CD4-positive, alpha-beta memory T cell (primary cell): ENCODE measurements at regions of chr9 and their contacts with region 1.

Region 1: GRCh38 chr9:101533334-101534107 is at the start of gene RNF20:
- DNase-seq: peak; percentile 99 to 100 (median 99)
- H3K4me3 ChIP-seq: peak within 1 kb of the TSS; percentile 73 to 79
- H3K4me3 Mint-ChIP-seq: peak within 1 kb of the TSS; percentile 89 to 98 (median 92)
- H3K27ac ChIP-seq: peak within 1 kb of the TSS; percentile 98
- H3K27ac Mint-ChIP-seq: peak within 1 kb of the TSS; percentile 97 to 100 (median 99)
- H3K4me1 ChIP-seq: peaks cover 49% of the 10 kb centered on the region
- H3K4me1 Mint-ChIP-seq: peaks cover 11 to 33% (median 18%) of the 10 kb centered on the region in 4 donors
- H3K27me3 ChIP-seq: no peaks in the 10 kb centered on the region
- H3K27me3 Mint-ChIP-seq: peaks cover 0 to 3% of the 10 kb centered on the region in 2 donors
- total RNA-seq, gene RNF20: 64.5 to 67.4 TPM

Region 2: GRCh38 chr9:100411472-100412283 is 1121.8 kb before region 1 on chr9:
- CTCF ChIA-PET with region 1: no interaction called
- POLR2A ChIA-PET with region 1: no interaction called
- intact Hi-C with region 1: loop called (anchors 5 kb)
- DNase-seq: peak; percentile 80 to 88 (median 81)
- H3K4me3 ChIP-seq: peak overlapping the region; percentile 58 to 59
- H3K4me3 Mint-ChIP-seq: peak overlapping the region; percentile 86 to 94 (median 90)
- H3K27ac ChIP-seq: no peak overlapping the region
- H3K27ac Mint-ChIP-seq: peak overlapping the region; percentile 57 to 92 (median 85)
- H3K4me1 ChIP-seq: peaks cover 8% of the 10 kb centered on the region
- H3K4me1 Mint-ChIP-seq: peaks cover 9 to 14% (median 13%) of the 10 kb centered on the region in 4 donors
- H3K27me3 ChIP-seq: no peaks in the 10 kb centered on the region
- H3K27me3 Mint-ChIP-seq: peaks cover 5 to 20% of the 10 kb centered on the region in 2 donors

Region 3: DNA sequence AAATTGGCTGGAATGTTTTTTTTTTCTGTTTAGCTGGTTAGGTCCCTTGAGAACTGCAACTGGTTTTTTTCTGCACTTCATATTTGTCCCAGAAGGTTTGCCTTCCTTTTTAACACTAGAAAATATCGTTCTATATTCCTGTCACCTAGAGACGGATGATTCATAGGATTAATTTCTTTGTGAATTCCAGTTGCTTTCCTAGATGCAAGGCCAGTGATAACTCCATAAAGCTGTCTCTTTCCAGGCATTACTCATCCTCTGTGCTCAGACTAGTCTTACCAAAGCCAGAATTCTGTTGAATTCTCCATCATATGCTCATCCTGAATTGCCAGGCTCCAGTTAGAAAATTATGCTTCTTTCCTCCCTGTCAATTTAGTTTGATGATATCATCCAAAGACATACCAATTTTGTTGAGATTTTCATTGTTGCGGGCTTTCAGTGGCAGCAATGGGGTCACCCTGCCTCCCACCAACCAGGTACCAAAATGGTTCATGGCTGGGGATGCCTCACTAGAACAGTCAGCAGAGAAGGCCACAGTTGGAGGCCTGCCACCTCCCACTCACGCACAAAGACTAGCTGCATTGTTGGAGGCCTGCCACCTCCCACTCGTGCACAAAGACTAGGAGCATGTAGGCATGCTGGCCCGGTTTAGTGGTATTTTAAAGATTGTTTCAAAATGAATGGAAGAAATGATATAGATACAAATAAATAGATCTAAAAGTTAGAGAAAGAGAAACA is 157.2 kb before region 1 on chr9:
- CTCF ChIA-PET with region 1: no interaction called
- POLR2A ChIA-PET with region 1: no interaction called
- intact Hi-C with region 1: no loop called
- DNase-seq: peak in 1 of 5 donors; percentile 28
- H3K4me3 ChIP-seq: no peak overlapping the region
- H3K4me3 Mint-ChIP-seq: no peak overlapping the region
- H3K27ac ChIP-seq: no peak overlapping the region
- H3K27ac Mint-ChIP-seq: no peak overlapping the region
- H3K4me1 ChIP-seq: no peaks in the 10 kb centered on the region
- H3K4me1 Mint-ChIP-seq: no peaks in the 10 kb centered on the region
- H3K27me3 ChIP-seq: no peaks in the 10 kb centered on the region
- H3K27me3 Mint-ChIP-seq: peaks cover 9 to 13% of the 10 kb centered on the region in 2 donors

Region 4: DNA sequence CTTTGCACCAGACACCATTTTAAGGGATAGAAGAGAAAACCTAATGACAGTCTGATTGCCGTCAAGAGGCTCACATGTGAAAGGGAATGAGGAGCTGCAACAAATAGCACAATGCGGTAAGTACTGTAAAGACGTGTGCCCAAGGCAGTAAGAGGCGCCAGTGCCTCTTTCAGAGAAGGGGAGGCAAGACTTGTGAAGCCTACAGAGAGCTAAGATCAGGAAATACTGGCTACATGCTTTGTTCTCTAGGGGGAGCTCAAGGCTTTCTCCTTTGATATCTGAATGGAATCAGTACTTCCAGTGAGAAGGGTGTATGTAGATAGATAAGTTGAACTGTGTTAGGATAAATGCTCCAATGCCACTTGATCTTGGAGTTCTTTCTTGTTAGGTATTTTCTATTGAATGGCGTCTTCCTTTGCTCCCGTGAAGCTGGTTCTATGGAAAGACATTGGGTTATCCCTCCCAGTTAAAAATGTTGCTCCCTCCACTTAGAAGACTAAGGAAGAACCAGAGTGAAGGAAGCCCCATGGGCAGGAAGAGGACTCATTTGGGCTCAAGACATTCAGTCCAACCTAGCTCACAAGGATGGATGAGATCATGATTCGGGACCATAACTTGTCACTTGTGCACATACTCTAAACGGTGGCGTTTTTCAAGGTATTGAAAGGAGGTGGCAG is 74.4 kb before region 1 on chr9:
- CTCF ChIA-PET with region 1: interaction called, 65 read pairs
- POLR2A ChIA-PET with region 1: interaction called, 3 read pairs
- intact Hi-C with region 1: loop called (anchors 1 kb)
- DNase-seq: peak; percentile 22 to 39 (median 30)
- H3K4me3 ChIP-seq: no peak overlapping the region
- H3K4me3 Mint-ChIP-seq: no peak overlapping the region
- H3K27ac ChIP-seq: no peak overlapping the region
- H3K27ac Mint-ChIP-seq: no peak overlapping the region
- H3K4me1 ChIP-seq: no peaks in the 10 kb centered on the region
- H3K4me1 Mint-ChIP-seq: no peaks in the 10 kb centered on the region
- H3K27me3 ChIP-seq: no peaks in the 10 kb centered on the region
- H3K27me3 Mint-ChIP-seq: peaks cover 3 to 9% of the 10 kb centered on the region in 2 donors

Region 5: GRCh38 chr9:101495810-101496209 is 37.7 kb before region 1 on chr9:
- CTCF ChIA-PET with region 1: no interaction called
- POLR2A ChIA-PET with region 1: no interaction called
- intact Hi-C with region 1: no loop called
- DNase-seq: no peak
- H3K4me3 ChIP-seq: no peak overlapping the region
- H3K4me3 Mint-ChIP-seq: no peak overlapping the region
- H3K27ac ChIP-seq: no peak overlapping the region
- H3K27ac Mint-ChIP-seq: no peak overlapping the region
- H3K4me1 ChIP-seq: no peaks in the 10 kb centered on the region
- H3K4me1 Mint-ChIP-seq: no peaks in the 10 kb centered on the region
- H3K27me3 ChIP-seq: no peaks in the 10 kb centered on the region
- H3K27me3 Mint-ChIP-seq: peaks cover 6 to 8% of the 10 kb centered on the region in 2 donors

Region 6: GRCh38 chr9:101569741-101570501 is 36.4 kb after region 1 on chr9:
- CTCF ChIA-PET with region 1: interaction called, 4 read pairs
- POLR2A ChIA-PET with region 1: interaction called, 11 read pairs
- intact Hi-C with region 1: loop called (anchors 1 kb)
- DNase-seq: peak; percentile 47 to 75 (median 67)
- H3K4me3 ChIP-seq: no peak overlapping the region
- H3K4me3 Mint-ChIP-seq: peak overlapping the region in 7 of 8 donors; percentile 1 to 80 (median 40)
- H3K27ac ChIP-seq: peak overlapping the region; percentile 5
- H3K27ac Mint-ChIP-seq: peak overlapping the region; percentile 84 to 94 (median 91)
- H3K4me1 ChIP-seq: peaks cover 74% of the 10 kb centered on the region
- H3K4me1 Mint-ChIP-seq: peaks cover 45 to 81% (median 67%) of the 10 kb centered on the region in 4 donors
- H3K27me3 ChIP-seq: no peaks in the 10 kb centered on the region
- H3K27me3 Mint-ChIP-seq: no peaks in the 10 kb centered on the region